ENCODE measurements at regions of chr3 and their contacts with region 1.

Region 1: DNA sequence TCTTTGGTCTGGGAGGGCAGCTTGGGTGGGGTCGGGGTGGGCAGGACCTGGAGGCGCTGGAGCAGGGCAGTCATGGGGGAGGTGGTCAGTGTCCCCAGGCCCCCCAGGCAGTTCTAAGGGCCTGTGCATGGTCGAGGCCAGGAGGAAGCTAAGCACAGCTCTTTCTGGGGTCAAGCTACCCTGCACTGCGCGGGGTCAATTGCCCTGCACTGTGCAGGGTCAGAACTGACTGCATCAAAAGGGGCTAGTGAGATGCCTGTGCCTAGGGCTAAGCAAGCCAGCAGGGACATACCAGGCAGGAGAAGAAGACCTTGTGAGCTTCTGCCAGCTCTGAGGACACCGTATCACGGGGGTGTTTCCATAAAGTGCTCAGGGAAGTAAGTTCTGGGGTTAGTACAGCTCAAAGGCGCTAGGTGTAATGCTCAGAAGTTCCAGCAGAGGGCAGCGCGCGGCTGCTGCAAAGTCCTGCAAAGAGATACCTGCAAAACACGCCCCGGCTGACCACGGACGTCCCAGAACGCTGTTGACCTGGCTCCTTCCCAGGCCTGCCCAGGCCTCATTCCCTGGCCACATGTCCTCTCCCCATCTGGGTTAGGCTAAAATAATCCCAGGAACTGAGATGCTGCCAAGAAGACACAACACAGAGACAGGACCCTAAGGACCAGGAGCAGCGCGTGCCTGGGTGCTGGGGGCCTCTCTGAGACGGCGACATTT is 18.8 kb upstream of the IQSEC1 start:
- DNase-seq: peak; percentile 51
- ATAC-seq: peak; percentile 88
- H3K4me3 ChIP-seq: no peak overlapping the region
- H3K27ac ChIP-seq: no peak overlapping the region
- H3K4me1 ChIP-seq: peaks cover 17% of the 10 kb centered on the region
- H3K27me3 ChIP-seq: no peaks in the 10 kb centered on the region
- CTCF ChIP-seq: peak; percentile 91
- EP300 ChIP-seq: no peak
- POLR2A ChIP-seq: no peak
- RAD21 ChIP-seq: peak; percentile 91

Region 2: GRCh38 chr3:13189639-13190377 is 97.8 kb after region 1 on chr3:
- CTCF ChIA-PET with region 1: no interaction called
- POLR2A ChIA-PET with region 1: no interaction called
- in situ Hi-C with region 1: no loop called
- intact Hi-C with region 1: loop called (anchors 1 kb)
- DNase-seq: peak; percentile 90
- ATAC-seq: peak; percentile 86
- H3K4me3 ChIP-seq: peak overlapping the region in 1 of 3 experiments; percentile 14; a peak in 1 of 6 replicates
- H3K27ac ChIP-seq: peak overlapping the region; percentile 66
- H3K4me1 ChIP-seq: peaks cover 64% of the 10 kb centered on the region
- H3K27me3 ChIP-seq: no peaks in the 10 kb centered on the region
- CTCF ChIP-seq: peak; percentile 24; the same call in 1 of the 2 replicates
- EP300 ChIP-seq: peak in 1 of 2 experiments; percentile 80; a peak in 3 of 4 replicates
- POLR2A ChIP-seq: no peak
- RAD21 ChIP-seq: peak; percentile 37; the same call in 1 of the 2 replicates

Region 3: GRCh38 chr3:13461169-13462158 is 369.4 kb after region 1 on chr3:
- CTCF ChIA-PET with region 1: interaction called, 9 read pairs
- POLR2A ChIA-PET with region 1: no interaction called
- in situ Hi-C with region 1: loop called (anchors 10 kb)
- intact Hi-C with region 1: loop called (anchors 1 kb)
- DNase-seq: peak; percentile 90
- ATAC-seq: peak; percentile 94
- H3K4me3 ChIP-seq: no peak overlapping the region
- H3K27ac ChIP-seq: no peak overlapping the region
- H3K4me1 ChIP-seq: peaks cover 93% of the 10 kb centered on the region
- H3K27me3 ChIP-seq: peaks cover 0 to 17% of the 10 kb centered on the region in 2 experiments; a peak in 3 of 5 replicates
- CTCF ChIP-seq: peak; percentile 99
- EP300 ChIP-seq: peak in 1 of 2 experiments; percentile 15; a peak in 1 of 4 replicates
- POLR2A ChIP-seq: no peak
- RAD21 ChIP-seq: peak; percentile 97